Activated B cell treated with CpG ODN at 0.5 μM for 24 hours (primary cell): ENCODE measurements at regions of chr17 and their contacts with region 1.

Region 1: DNA sequence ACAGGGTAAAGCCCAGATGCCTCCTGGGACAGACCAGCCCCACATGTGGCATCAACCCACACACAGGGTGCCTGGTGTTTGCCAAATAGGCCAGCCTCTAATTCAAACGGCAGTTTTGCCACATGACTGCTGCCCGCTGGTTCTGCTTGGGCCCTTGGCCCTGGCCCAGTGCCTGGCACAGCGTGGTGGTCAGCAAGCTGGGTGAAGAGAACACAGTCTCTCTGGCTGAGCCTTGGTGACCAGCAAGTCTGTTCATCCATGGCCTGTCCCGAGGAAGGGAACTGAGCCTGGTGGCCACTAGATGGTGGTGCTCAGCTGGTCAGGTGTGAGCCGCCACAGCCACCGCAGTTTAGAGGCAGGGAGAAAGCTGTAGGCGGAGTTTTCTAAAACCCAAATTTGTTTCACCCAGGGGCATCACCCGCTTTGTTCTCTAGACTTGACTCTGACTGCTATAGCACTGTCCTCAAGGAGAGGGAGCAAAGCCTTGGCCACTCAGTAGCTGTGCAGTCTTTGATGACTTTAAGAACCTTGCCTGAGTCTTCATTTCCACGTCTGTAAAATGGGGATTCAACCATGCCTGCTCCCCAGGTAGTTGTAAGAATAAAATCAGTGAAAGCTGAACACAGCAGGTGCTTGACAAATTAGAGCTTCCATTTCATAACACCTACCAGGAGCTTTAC is 4.7 kb upstream of the GFAP start:
- DNase-seq: peak; percentile 42
- ATAC-seq: peak; percentile 94
- H3K4me3 Mint-ChIP-seq: no peak overlapping the region
- H3K27ac Mint-ChIP-seq: no peak overlapping the region
- H3K4me1 Mint-ChIP-seq: peaks cover 15% of the 10 kb centered on the region
- H3K27me3 Mint-ChIP-seq: peaks cover 15% of the 10 kb centered on the region
- CTCF ChIP-seq: peak; percentile 29

Region 2: GRCh38 chr17:44889003-44889402 is 31.0 kb before region 1 on chr17:
- CTCF ChIA-PET with region 1: no interaction called
- POLR2A ChIA-PET with region 1: no interaction called
- intact Hi-C with region 1: no loop called
- DNase-seq: no peak
- ATAC-seq: no peak
- H3K4me3 Mint-ChIP-seq: no peak overlapping the region
- H3K27ac Mint-ChIP-seq: no peak overlapping the region
- H3K4me1 Mint-ChIP-seq: peaks cover 3% of the 10 kb centered on the region
- H3K27me3 Mint-ChIP-seq: no peaks in the 10 kb centered on the region
- CTCF ChIP-seq: no peak

Region 3: GRCh38 chr17:45021607-45022287 is 101.7 kb after region 1 on chr17:
- CTCF ChIA-PET with region 1: interaction called, 30 read pairs
- POLR2A ChIA-PET with region 1: interaction called, 4 read pairs
- intact Hi-C with region 1: loop called (anchors 1 kb)
- DNase-seq: peak; percentile 65
- ATAC-seq: peak; percentile 86
- H3K4me3 Mint-ChIP-seq: peak overlapping the region; percentile 39
- H3K27ac Mint-ChIP-seq: no peak overlapping the region
- H3K4me1 Mint-ChIP-seq: peaks cover 32% of the 10 kb centered on the region
- H3K27me3 Mint-ChIP-seq: peaks cover 37% of the 10 kb centered on the region
- CTCF ChIP-seq: no peak

Region 4: DNA sequence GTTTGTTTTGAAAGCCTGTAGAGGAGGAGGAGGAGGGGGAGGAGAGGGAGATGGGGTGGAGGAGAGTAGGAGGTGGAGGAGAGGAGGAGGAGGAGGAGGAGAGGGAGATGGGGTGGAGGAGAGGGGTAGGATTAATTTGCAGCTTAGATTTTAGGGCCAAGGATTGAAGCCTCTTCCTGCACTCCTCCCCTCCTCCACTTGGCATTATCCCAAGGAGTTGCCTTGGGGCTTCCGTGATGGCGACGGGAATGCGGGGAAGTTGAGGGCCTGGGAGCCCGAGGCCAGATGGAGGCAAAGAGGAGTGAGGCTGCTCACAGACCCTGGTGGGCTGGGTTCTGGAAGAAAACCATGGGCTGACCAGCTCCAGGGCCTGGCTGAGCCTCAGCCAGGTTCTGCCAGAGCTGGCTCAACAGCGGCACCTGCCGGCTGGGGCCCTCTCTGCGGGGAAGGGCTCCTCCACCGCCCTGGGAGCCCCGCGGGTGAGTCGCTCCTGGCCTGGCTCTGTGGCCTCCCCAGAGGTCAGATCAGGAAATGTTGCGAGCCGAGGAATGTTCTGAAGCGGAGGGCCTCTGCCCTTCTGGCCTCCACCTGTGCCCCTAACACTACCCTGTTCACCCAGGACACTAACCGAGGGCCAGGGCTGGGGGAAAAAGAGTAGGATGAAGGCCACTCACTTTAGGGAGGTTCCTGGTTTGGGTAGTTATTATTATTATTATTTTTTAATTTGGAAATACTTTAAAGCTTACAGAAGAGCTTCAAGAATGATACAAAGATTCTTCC is 277.7 kb after region 1 on chr17:
- CTCF ChIA-PET with region 1: interaction called, 5 read pairs
- POLR2A ChIA-PET with region 1: no interaction called
- intact Hi-C with region 1: loop called (anchors 5 kb)
- DNase-seq: peak; percentile 91
- ATAC-seq: peak; percentile 100
- H3K4me3 Mint-ChIP-seq: no peak overlapping the region
- H3K27ac Mint-ChIP-seq: no peak overlapping the region
- H3K4me1 Mint-ChIP-seq: peaks cover 4% of the 10 kb centered on the region
- H3K27me3 Mint-ChIP-seq: no peaks in the 10 kb centered on the region
- CTCF ChIP-seq: no peak